Mammary epithelial cell (primary cell): ENCODE measurements at regions of chr3 and their contacts with region 1.

Region 1: DNA sequence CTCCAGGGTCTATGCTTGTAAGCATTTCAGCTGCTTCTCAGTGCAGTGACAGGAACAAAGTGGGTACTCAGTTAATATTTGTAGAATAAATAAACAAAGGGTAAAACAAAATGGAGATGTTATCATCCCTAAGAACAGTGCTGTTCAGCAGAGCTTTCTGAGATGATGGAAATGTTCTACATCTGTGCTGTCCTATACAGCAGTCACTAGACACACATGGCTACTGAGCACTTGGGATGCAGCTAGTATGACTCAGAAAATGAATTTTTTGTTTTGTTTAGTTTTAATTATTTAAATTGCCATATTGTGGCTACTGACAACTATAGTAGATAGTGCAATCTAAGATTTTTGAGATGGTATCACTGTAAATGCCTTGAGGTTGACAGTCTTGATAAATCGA is 283.8 kb upstream of the ADAMTS9 start:
- DNase-seq: no peak
- H3K4me3 ChIP-seq: no peak overlapping the region
- H3K27ac ChIP-seq: no peak overlapping the region
- H3K4me1 ChIP-seq: peaks cover 28% of the 10 kb centered on the region
- H3K27me3 ChIP-seq: no peaks in the 10 kb centered on the region
- CTCF ChIP-seq: no peak

Region 2: GRCh38 chr3:64796607-64797399 is 174.8 kb before region 1 on chr3:
- CTCF ChIA-PET with region 1: no interaction called
- dilution Hi-C with region 1: no loop called
- in situ Hi-C with region 1: no loop called
- intact Hi-C with region 1: no loop called
- DNase-seq: peak; percentile 6
- H3K4me3 ChIP-seq: no peak overlapping the region
- H3K27ac ChIP-seq: no peak overlapping the region
- H3K4me1 ChIP-seq: no peaks in the 10 kb centered on the region
- H3K27me3 ChIP-seq: no peaks in the 10 kb centered on the region
- CTCF ChIP-seq: no peak

Region 3: DNA sequence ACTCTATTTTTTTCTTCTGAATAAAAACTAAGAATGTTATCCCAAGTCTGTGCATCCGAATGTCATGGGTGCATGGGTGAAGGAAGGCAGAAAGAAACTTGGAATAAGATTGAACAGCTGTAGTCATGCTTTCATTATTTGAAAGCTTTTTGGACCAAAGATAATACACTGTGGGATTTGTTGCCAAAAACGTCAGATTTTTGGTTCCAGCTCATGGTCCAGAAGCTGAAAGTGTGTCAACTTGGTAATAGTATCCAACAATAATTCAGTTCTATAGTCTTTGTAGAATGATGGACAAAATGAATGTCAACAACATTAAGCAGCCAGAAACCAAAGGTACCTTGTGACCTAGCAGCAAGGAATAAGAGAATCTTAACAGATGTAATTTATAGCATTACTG is 44.1 kb after region 1 on chr3:
- CTCF ChIA-PET with region 1: no interaction called
- dilution Hi-C with region 1: no loop called
- in situ Hi-C with region 1: no loop called
- intact Hi-C with region 1: loop called (anchors 2 kb)
- DNase-seq: no peak
- H3K4me3 ChIP-seq: no peak overlapping the region
- H3K27ac ChIP-seq: no peak overlapping the region
- H3K4me1 ChIP-seq: no peaks in the 10 kb centered on the region
- H3K27me3 ChIP-seq: no peaks in the 10 kb centered on the region
- CTCF ChIP-seq: no peak